Esophagus muscularis mucosa (tissue), 4 donors: ENCODE measurements at regions of chr11 and their contacts with region 1.

Region 1: GRCh38 chr11:67118801-67119584 is at the start of gene KDM2A:
- DNase-seq: peak; percentile 100
- H3K4me3 ChIP-seq: peak within 1 kb of the TSS; percentile 94 to 100 (median 98)
- H3K27ac ChIP-seq: peak within 1 kb of the TSS; percentile 99
- H3K4me1 ChIP-seq: peaks cover 27 to 51% (median 40%) of the 10 kb centered on the region in 4 donors
- H3K27me3 ChIP-seq: no peaks in the 10 kb centered on the region
- CTCF ChIP-seq: peak in 2 of 3 experiments; percentile 31 to 50
- EP300 ChIP-seq: no peak
- POLR2A ChIP-seq: no peak
- total RNA-seq, gene KDM2A: 44.9 to 69.5 (median 51.4) TPM

Region 2: GRCh38 chr11:67010323-67010905 is 108.6 kb before region 1 on chr11:
- intact Hi-C with region 1: no loop called
- DNase-seq: no peak
- H3K4me3 ChIP-seq: no peak overlapping the region
- H3K27ac ChIP-seq: no peak overlapping the region
- H3K4me1 ChIP-seq: no peaks in the 10 kb centered on the region
- H3K27me3 ChIP-seq: peaks cover 0 to 5% (median 0%) of the 10 kb centered on the region in 4 donors
- CTCF ChIP-seq: no peak
- EP300 ChIP-seq: no peak
- POLR2A ChIP-seq: no peak

Region 3: DNA sequence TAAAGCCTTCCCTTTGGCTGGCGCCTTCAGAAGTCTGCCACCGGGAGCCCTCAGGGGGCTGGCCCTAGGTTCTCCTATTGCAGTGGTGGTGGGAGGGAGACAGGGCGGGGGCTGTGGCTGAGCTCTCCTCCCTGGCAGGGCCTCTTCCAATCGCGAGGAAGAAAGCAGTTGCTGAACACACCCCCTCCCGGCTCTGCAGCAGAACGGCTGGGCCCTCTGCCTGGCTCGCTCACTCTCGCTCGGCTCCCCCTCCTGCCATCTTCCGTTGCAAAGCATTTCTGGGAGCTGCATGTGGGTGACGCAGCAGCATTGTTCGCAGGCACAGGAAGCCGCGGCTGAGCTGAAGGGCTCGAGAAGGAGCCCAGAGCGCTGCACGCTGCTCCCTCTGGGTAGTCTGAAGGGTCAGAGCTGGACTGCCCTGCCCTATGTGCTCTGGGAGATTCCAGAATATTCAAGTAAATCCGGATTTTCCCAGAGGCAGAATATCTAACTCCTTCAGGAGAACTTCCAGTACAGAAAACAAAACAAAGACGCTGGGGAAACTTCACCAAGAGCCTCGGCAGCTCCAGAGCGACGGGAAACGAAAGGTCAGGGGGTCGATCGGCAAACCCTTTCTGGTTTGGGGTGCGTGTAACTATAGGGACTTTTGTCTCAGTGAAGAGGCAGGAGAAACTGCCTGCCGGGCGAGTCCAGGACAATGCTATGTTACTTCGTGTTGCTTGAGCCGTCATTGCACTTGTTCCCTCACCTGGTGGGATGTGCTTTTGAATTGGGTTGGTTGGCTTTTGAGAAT is 121.0 kb after region 1 on chr11:
- intact Hi-C with region 1: loop called (anchors 5 kb)
- DNase-seq: peak; percentile 99
- H3K4me3 ChIP-seq: peak overlapping the region; percentile 68 to 75 (median 70)
- H3K27ac ChIP-seq: peak overlapping the region; percentile 89 to 95 (median 93)
- H3K4me1 ChIP-seq: peaks cover 39 to 63% (median 56%) of the 10 kb centered on the region in 4 donors
- H3K27me3 ChIP-seq: no peaks in the 10 kb centered on the region
- CTCF ChIP-seq: peak in 2 of 3 experiments; percentile 14 to 23
- EP300 ChIP-seq: no peak
- POLR2A ChIP-seq: peak; percentile 78